Activated naive CD4-positive, alpha-beta T cell treated with anti-CD3 and anti-CD28 coated beads for 36 hours (primary cell): ENCODE measurements at regions of chr2 and their contacts with region 1.

Region 1: GRCh38 chr2:101473911-101474701 is 806 bp downstream of the RFX8 start:
- DNase-seq: peak; percentile 64
- H3K4me3 Mint-ChIP-seq: peak overlapping the region; percentile 80
- H3K27ac Mint-ChIP-seq: no peak overlapping the region
- H3K4me1 Mint-ChIP-seq: peaks cover 6% of the 10 kb centered on the region
- H3K27me3 Mint-ChIP-seq: peaks cover 3% of the 10 kb centered on the region

Region 2: DNA sequence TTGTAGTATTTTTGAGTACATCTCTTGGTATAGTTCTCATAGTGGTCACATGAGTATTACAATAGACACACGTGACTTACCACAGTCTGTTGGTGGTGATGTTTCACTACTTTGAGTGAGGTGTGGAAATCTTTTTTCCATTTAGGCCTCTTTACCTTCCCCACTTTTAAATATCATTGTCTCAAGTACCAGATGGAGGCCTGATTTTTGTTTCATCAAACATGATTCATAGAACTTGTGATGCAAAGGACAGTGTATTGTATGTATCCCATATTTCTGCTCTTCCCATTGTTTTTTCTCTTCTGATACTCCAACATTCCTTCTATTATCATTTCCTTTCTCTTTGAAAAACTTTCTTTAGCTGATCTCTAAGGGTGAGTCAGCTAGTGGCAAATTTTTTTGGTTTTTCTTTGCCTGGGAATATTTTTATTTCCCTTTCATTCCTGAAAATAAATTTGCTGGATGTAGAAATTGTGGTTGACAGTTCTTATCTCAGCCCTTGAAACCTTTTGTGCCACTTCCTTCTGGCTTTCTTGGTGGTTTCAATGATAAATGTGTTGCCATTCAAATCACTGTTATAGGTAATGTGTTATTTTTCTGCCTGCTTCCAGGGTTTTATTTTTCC is 32.0 kb before region 1 on chr2:
- CTCF ChIA-PET with region 1: no interaction called
- intact Hi-C with region 1: loop called (anchors 2 kb)
- DNase-seq: no peak
- H3K4me3 Mint-ChIP-seq: no peak overlapping the region
- H3K27ac Mint-ChIP-seq: peak overlapping the region; percentile 39
- H3K4me1 Mint-ChIP-seq: peaks cover 23% of the 10 kb centered on the region
- H3K27me3 Mint-ChIP-seq: no peaks in the 10 kb centered on the region

Region 3: DNA sequence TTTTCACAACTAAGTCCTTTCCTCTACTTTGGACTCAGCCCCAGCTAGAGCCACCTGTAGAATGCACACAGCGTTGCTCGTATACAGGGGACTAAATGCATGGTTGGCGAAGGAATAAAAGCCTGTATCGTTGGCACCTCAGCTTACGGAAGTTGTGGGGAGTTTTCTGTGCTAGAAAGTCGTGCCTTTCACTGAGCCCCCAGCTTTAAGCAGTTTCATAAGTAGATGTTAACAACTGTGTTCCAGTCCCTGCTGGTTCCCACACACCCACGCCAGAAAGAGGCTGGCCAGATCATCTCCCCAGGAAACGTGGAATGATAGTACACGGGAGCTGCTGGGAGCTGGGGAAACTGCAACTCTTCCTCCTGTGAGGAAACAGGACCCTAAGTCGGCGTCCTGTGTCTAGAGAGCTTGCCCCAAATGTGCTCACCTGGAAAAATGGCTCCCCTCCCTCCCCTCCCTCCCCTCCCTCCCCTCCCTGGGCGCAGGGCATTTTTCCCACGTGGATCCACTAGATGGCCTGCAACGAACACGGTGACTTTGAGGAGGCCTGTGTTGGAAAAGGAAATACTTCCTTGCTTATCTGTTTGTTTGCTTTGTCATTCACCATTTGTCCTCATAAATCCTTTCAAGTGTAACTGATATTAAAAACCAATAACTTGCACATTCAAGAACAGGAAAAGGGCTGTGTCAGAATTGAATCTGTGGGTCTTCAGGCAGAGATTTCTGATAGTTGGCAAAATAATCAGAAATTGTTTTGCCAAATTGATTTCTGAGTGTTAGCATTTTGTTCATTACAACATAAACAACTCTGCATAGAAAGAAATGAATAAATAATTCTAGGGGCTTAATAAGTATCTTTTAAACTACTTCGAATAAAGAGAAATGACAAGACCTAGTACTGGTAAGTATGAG is 44.7 kb after region 1 on chr2:
- CTCF ChIA-PET with region 1: no interaction called
- intact Hi-C with region 1: loop called (anchors 2 kb)
- DNase-seq: peak; percentile 43
- H3K4me3 Mint-ChIP-seq: no peak overlapping the region
- H3K27ac Mint-ChIP-seq: no peak overlapping the region
- H3K4me1 Mint-ChIP-seq: peaks cover 47% of the 10 kb centered on the region
- H3K27me3 Mint-ChIP-seq: no peaks in the 10 kb centered on the region

Region 4: DNA sequence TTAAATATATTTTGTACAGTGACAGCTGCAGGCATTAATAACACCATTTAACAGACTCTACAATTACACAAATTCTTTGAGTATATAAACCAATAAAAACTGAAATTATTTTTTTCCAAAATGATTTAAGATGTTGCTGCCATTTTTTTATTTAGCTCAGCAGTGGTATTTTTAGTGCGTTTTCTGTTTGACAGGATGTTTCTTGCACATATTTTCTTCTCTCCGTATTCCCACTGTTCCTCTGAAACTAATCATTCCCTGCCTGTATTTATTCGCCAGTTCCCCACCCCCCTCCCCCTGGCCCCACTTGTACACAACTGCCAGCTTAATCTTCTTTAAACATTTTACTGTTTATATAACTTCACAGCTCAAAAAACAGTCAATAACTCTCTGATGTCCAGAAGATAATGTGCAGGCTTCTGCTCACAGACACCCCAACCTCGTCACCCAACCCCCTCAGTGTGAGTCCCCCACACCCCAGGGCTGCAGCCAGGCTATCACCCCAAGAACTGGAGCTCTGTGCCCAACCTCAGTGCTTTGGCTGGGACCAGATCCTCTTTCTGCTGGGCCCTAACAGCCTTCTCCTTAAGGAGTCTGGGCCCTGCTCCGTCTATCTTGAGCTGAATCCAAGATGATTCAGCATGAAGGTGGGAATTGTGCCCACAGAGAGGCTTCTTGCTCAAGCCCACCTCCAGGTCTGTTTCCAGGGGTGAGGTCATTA is 181.8 kb after region 1 on chr2:
- CTCF ChIA-PET with region 1: no interaction called
- intact Hi-C with region 1: loop called (anchors 1 kb)
- DNase-seq: no peak
- H3K4me3 Mint-ChIP-seq: no peak overlapping the region
- H3K27ac Mint-ChIP-seq: no peak overlapping the region
- H3K4me1 Mint-ChIP-seq: peaks cover 25% of the 10 kb centered on the region
- H3K27me3 Mint-ChIP-seq: no peaks in the 10 kb centered on the region

Region 5: DNA sequence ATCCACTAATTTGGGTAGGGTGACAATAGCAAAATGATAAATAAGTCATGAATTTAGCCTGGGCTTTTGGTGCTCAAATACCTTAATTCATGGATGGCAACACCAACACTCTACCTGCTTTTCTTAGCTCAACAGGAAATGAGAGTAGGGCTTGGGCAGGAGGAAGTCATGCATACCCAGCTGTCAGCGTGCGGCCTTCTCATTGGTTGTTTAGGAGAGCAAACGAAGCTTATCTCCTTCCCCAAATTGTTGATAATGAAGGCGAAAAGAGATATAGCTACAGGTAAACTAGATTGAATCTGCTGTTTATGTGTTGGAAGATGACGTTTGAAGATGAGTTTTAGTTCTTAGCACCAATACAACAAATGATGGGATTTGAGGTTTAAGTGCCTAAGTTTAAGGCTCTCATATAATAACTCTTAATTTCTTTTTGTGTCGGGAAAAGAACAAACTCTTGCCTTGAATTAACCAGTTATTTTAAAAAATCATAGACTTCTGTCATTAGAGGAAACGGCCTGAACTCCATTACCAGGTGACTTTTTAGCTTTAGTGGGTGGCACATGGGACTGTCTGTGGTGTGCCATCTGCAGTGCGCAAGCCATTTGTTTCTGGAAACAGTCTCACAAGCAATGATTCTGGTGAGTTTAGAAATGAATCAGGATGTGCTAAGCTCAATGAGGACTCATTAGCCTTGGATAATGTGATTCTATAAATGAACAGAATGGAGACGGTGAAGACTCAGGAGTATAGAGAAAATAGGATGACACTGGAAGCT is 243.2 kb after region 1 on chr2:
- CTCF ChIA-PET with region 1: no interaction called
- intact Hi-C with region 1: loop called (anchors 5 kb)
- DNase-seq: peak; percentile 75
- H3K4me3 Mint-ChIP-seq: peak overlapping the region; percentile 38
- H3K27ac Mint-ChIP-seq: peak overlapping the region; percentile 95
- H3K4me1 Mint-ChIP-seq: peaks cover 92% of the 10 kb centered on the region
- H3K27me3 Mint-ChIP-seq: no peaks in the 10 kb centered on the region